ENCODE measurements at regions of chr19 and their contacts with region 1.

Region 1: DNA sequence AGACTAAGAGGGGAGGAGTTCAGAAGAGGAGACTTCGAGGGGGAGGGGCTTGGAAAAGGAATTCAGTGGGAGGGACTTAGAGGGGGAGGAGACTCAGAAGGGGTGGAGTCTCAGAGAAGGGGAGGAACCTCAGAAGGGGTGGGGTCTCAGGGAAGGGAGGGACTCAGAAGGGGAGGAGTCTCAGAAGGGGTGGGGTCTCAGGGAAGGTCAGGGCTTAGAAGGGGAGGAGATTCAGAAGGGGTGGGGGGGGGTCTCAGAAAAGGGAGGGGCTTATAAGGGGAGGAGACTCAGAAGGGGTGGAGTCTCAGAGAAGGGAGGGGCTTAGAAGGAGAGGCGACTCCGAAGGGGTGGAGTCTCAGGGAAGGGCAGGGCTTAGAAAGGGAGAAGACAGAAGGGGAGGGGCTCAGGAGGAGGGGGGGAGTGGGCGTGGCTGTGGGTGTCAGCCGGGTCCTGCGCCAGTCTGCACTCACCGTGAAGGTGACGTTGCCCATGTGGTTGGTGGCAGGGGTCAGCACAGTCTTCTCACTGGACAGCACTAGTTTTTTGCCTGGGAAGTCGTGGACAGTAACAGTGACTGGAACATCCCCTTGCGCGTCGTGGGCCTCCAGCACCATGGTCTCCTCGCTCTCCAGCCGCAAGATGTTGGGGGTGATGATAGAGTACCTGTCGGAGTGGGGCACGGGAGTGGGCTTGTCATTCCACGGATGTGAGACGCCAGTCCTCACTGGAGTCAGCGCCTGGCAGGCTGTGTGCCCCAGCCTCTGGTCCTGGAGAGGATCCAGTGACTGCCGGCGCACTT is 1.5 kb downstream of the C3 start:
- DNase-seq: peak; percentile 78
- H3K4me3 Mint-ChIP-seq: no peak overlapping the region
- H3K27ac Mint-ChIP-seq: no peak overlapping the region
- H3K4me1 Mint-ChIP-seq: peaks cover 33% of the 10 kb centered on the region
- H3K27me3 Mint-ChIP-seq: peaks cover 3% of the 10 kb centered on the region

Region 2: DNA sequence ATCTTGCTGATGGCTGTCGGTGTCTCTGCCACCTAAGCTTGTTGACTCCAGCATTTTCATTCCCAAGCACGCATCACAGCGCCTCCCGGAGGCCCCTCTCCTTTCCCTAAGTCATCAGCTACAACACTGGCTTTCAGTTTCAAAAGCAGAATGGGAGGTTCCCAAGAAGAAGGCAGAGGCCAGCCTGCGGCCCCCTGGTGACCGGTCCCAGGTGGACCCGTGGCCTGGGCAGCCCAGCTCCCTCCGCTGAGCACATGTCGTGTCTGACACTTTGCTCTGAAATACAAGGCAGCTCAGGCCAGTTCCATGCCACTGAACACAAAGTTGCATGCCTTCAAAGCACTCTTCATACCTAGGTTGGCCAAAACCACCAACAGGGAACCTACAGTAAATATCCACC is 447.7 kb before region 1 on chr19:
- intact Hi-C with region 1: no loop called
- DNase-seq: no peak
- H3K4me3 Mint-ChIP-seq: no peak overlapping the region
- H3K27ac Mint-ChIP-seq: no peak overlapping the region
- H3K4me1 Mint-ChIP-seq: peaks cover 7% of the 10 kb centered on the region
- H3K27me3 Mint-ChIP-seq: no peaks in the 10 kb centered on the region

Region 3: DNA sequence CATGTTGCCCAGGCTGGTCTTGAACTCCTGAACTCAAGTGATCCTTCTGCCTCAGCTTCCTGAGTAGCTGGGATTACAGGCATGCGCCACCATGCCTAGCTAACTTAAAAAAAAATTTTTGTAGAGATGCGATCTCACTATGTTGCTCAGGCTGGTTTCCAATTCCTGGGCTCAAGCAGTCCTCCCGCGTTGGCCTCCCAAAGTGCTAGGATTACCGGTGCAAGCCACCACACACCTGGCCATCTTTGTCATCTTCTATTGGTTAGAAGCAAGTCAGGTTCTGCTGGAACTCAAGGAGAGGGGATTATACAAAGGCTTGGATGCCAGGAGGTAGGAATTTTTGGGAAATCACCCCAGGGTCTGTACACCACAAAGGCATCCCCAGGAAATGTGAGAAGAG is 74.1 kb before region 1 on chr19:
- intact Hi-C with region 1: loop called (anchors 5 kb)
- DNase-seq: no peak
- H3K4me3 Mint-ChIP-seq: no peak overlapping the region
- H3K27ac Mint-ChIP-seq: no peak overlapping the region
- H3K4me1 Mint-ChIP-seq: peaks cover 33% of the 10 kb centered on the region
- H3K27me3 Mint-ChIP-seq: no peaks in the 10 kb centered on the region

Region 4: GRCh38 chr19:6730153-6730825 is 11.3 kb after region 1 on chr19:
- intact Hi-C with region 1: no loop called
- DNase-seq: peak; percentile 76
- H3K4me3 Mint-ChIP-seq: no peak overlapping the region
- H3K27ac Mint-ChIP-seq: no peak overlapping the region
- H3K4me1 Mint-ChIP-seq: peaks cover 7% of the 10 kb centered on the region
- H3K27me3 Mint-ChIP-seq: no peaks in the 10 kb centered on the region

Region 5: DNA sequence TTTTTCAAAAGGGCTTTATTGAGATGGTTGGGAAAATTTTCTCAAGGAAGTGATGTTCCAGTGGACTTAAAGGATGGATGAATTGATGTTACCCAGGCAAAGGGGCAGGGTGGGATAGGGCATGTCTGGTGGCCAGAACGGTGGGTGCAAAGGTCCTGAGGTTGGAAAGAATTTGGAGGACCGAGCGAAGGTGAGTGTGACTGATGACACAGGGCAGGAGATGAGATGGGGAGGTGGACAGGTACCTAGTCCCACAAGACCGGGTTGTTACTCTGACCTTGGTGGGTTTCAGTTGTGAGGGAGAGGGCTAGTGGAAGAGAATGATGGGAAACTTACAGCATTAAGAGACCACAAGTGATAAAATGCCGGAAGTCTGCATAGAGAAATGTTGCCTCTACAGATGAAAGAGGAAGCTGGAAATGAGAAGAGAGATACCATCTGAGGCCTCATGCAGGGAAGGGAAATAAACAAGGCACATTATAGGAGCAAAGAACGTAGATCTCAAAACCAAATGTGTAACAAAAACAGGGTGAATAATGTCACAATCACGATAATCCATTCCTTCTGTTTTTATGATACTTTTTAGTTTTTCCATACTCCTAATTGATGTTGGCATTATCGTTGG is 172.9 kb after region 1 on chr19:
- intact Hi-C with region 1: no loop called
- DNase-seq: peak; percentile 69
- H3K4me3 Mint-ChIP-seq: peak overlapping the region; percentile 62
- H3K27ac Mint-ChIP-seq: peak overlapping the region; percentile 86
- H3K4me1 Mint-ChIP-seq: peaks cover 49% of the 10 kb centered on the region
- H3K27me3 Mint-ChIP-seq: no peaks in the 10 kb centered on the region

Measured in activated CD4-positive, alpha-beta T cell treated with anti-CD3 and anti-CD28 coated beads, Interleukin-2, amount 10 ng/mL, durations not matched to agents 24 days and 14 days (primary cell).